ENCODE measurements at regions of chr4 and their contacts with region 1.

Region 1: GRCh38 chr4:48403358-48403757 is 62.0 kb downstream of the SLAIN2 start:
- DNase-seq: no peak
- H3K4me3 ChIP-seq: no peak overlapping the region
- H3K27ac ChIP-seq: no peak overlapping the region
- H3K4me1 ChIP-seq: no peaks in the 10 kb centered on the region
- H3K27me3 ChIP-seq: no peaks in the 10 kb centered on the region
- CTCF ChIP-seq: no peak

Region 2: GRCh38 chr4:48346594-48346993 is 56.8 kb before region 1 on chr4:
- intact Hi-C with region 1: loop called (anchors 5 kb)
- DNase-seq: no peak
- H3K4me3 ChIP-seq: no peak overlapping the region
- H3K27ac ChIP-seq: no peak overlapping the region
- H3K4me1 ChIP-seq: peaks cover 95% of the 10 kb centered on the region
- H3K27me3 ChIP-seq: no peaks in the 10 kb centered on the region
- CTCF ChIP-seq: no peak

Region 3: GRCh38 chr4:48360285-48361010 is 42.9 kb before region 1 on chr4:
- intact Hi-C with region 1: no loop called
- DNase-seq: no peak
- H3K4me3 ChIP-seq: no peak overlapping the region
- H3K27ac ChIP-seq: no peak overlapping the region
- H3K4me1 ChIP-seq: peaks cover 45% of the 10 kb centered on the region
- H3K27me3 ChIP-seq: no peaks in the 10 kb centered on the region
- CTCF ChIP-seq: no peak

Measured in left ventricle myocardium inferior (tissue), 1 donor.